ENCODE measurements at regions of chr17 and their contacts with region 1.

Region 1: GRCh38 chr17:6098050-6098822 is 28.1 kb downstream of the WSCD1 start:
- DNase-seq: peak in 1 of 2 donors; percentile 63
- ATAC-seq: peak; percentile 81 to 97 (median 91)
- H3K4me3 ChIP-seq: no peak overlapping the region
- H3K27ac ChIP-seq: peak overlapping the region; percentile 34 to 87 (median 72)
- H3K4me1 ChIP-seq: peaks cover 0 to 31% (median 11%) of the 10 kb centered on the region in 9 donors
- H3K27me3 ChIP-seq: no peaks in the 10 kb centered on the region
- CTCF ChIP-seq: no peak

Region 2: GRCh38 chr17:6153375-6153774 is 55.1 kb after region 1 on chr17:
- intact Hi-C with region 1: loop called in 1 of 10 experiments (anchors 10 kb)
- DNase-seq: no peak
- ATAC-seq: no peak
- H3K4me3 ChIP-seq: no peak overlapping the region
- H3K27ac ChIP-seq: no peak overlapping the region
- H3K4me1 ChIP-seq: no peaks in the 10 kb centered on the region
- H3K27me3 ChIP-seq: peaks cover 0 to 14% (median 9%) of the 10 kb centered on the region in 7 donors
- CTCF ChIP-seq: no peak

Region 3: GRCh38 chr17:6323582-6324356 is 225.5 kb after region 1 on chr17:
- intact Hi-C with region 1: loop called in 3 of 10 experiments (anchors 5 to 10 kb)
- DNase-seq: peak in 1 of 2 donors; percentile 36
- ATAC-seq: peak in 7 of 8 donors; percentile 30 to 62 (median 44)
- H3K4me3 ChIP-seq: no peak overlapping the region
- H3K27ac ChIP-seq: peak overlapping the region in 5 of 10 donors; percentile 7 to 64 (median 32)
- H3K4me1 ChIP-seq: peaks cover 0 to 46% (median 17%) of the 10 kb centered on the region in 9 donors
- H3K27me3 ChIP-seq: peaks cover 0 to 4% (median 0%) of the 10 kb centered on the region in 7 donors
- CTCF ChIP-seq: no peak